K562 (cell line): ENCODE measurements at regions of chr11 and their contacts with region 1.

Region 1: DNA sequence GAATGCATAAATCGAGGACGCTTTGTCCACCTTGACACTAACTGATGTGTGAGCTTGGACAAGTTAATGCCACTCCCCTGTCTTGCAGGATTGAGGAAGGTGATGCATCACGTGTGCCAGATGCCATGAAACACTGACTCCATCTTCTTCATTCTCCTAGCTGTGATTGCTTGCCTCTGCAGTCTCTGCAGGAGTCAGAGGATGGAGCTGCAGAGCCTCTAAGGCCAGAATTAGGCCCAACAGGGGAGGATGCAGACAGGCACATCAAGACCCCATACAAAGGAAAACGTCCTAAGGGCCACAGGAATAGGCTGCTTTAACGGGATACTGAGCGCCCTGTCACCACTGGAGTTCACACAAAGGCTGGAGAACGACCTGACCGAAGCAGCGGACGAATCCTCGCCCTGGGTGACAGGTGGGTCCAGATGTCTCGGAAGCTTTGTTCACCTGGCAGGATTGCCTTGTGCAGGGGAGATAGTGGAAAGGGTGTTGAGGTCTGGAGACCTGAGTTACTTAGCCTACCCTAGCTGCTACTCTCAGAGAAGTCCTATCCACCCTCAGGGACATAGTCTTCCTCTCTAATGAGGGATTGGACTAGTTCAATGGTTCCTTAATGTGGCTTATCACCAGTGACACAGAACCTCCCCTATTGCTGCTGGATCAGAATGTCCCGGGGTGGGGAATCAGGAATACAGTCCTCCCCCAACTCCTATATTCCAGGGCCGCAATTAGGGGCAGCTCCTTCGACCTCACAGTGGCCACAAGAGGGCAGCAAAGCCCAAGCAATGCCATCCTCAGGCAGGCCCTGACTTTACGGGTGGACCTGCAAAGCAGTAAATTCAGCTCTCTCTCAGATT is 32.4 kb downstream of the DBX1 start:
- DNase-seq: peak; percentile 70 to 81 (median 74)
- ATAC-seq: peak; percentile 97
- H3K4me3 ChIP-seq: no peak overlapping the region
- H3K27ac ChIP-seq: no peak overlapping the region
- H3K4me1 ChIP-seq: peaks cover 0 to 6% of the 10 kb centered on the region in 2 experiments; a peak in 2 of 5 replicates
- H3K27me3 ChIP-seq: peaks cover 2 to 25% of the 10 kb centered on the region in 2 experiments; a peak in 3 of 5 replicates
- CTCF ChIP-seq: peak; percentile 87 to 90 (median 88)
- EP300 ChIP-seq: no peak
- POLR2A ChIP-seq: no peak
- RAD21 ChIP-seq: peak; percentile 81 to 93

Region 2: GRCh38 chr11:19903620-19904069 is 224.3 kb before region 1 on chr11:
- CTCF ChIA-PET with region 1: interaction called, 26 read pairs
- POLR2A ChIA-PET with region 1: no interaction called
- in situ Hi-C with region 1: no loop called
- intact Hi-C with region 1: loop called (anchors 1 kb)
- DNase-seq: peak; percentile 55 to 77 (median 68)
- ATAC-seq: peak; percentile 94
- H3K4me3 ChIP-seq: no peak overlapping the region
- H3K27ac ChIP-seq: no peak overlapping the region
- H3K4me1 ChIP-seq: no peaks in the 10 kb centered on the region
- H3K27me3 ChIP-seq: peaks cover 0 to 5% of the 10 kb centered on the region in 2 experiments; a peak in 1 of 5 replicates
- CTCF ChIP-seq: peak; percentile 71 to 86 (median 79)
- EP300 ChIP-seq: no peak
- POLR2A ChIP-seq: no peak
- RAD21 ChIP-seq: peak; percentile 58 to 75

Region 3: DNA sequence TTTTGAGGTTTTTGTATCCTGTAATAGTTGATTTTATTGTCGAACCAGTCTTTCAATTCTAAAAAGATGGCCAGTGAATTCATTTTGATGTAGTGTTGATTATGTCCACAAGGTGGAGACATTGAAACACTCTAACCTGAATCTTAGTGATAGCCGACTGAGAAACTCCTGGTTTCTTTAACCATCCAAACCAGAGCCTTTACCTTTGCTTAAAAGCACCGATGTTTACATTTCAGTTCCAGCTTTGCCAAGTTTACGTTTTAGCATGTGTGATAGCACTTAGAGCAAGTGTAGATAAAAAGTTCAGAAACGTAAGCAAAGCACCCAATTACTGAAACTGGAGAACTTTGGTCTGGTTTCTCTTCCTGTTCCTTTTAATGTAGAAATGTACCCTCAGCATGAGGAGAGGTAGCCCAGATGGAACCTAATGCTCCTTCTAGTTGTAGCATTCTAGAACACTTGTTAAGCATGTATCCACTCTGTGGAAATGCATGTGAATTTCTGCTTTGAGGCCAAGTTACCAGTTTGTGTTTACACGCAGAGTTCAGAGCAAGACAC is 176.3 kb before region 1 on chr11:
- CTCF ChIA-PET with region 1: interaction called, 29 read pairs
- POLR2A ChIA-PET with region 1: interaction called, 4 read pairs
- in situ Hi-C with region 1: loop called (anchors 5 kb)
- intact Hi-C with region 1: loop called (anchors 1 kb)
- DNase-seq: peak; percentile 49 to 68 (median 58)
- ATAC-seq: peak; percentile 68
- H3K4me3 ChIP-seq: no peak overlapping the region
- H3K27ac ChIP-seq: no peak overlapping the region
- H3K4me1 ChIP-seq: no peaks in the 10 kb centered on the region; a peak in 2 of 5 replicates
- H3K27me3 ChIP-seq: peaks cover 21 to 22% of the 10 kb centered on the region in 2 experiments
- CTCF ChIP-seq: peak; percentile 52 to 79 (median 56)
- EP300 ChIP-seq: no peak
- POLR2A ChIP-seq: no peak
- RAD21 ChIP-seq: peak; percentile 92 to 97

Region 4: GRCh38 chr11:20355221-20356219 is 227.6 kb after region 1 on chr11:
- CTCF ChIA-PET with region 1: interaction called, 3 read pairs
- POLR2A ChIA-PET with region 1: interaction called, 4 read pairs
- in situ Hi-C with region 1: no loop called
- intact Hi-C with region 1: loop called (anchors 1 kb)
- DNase-seq: peak; percentile 45 to 72 (median 58)
- ATAC-seq: peak; percentile 89
- H3K4me3 ChIP-seq: no peak overlapping the region
- H3K27ac ChIP-seq: no peak overlapping the region
- H3K4me1 ChIP-seq: peaks cover 0 to 28% of the 10 kb centered on the region in 2 experiments; a peak in 4 of 5 replicates
- H3K27me3 ChIP-seq: no peaks in the 10 kb centered on the region
- CTCF ChIP-seq: peak; percentile 59 to 70 (median 64)
- EP300 ChIP-seq: no peak
- POLR2A ChIP-seq: no peak
- RAD21 ChIP-seq: peak; percentile 10 to 40; a peak in 2 of 4 replicates

Region 5: GRCh38 chr11:20489948-20490347 is 362.0 kb after region 1 on chr11:
- CTCF ChIA-PET with region 1: no interaction called
- POLR2A ChIA-PET with region 1: no interaction called
- in situ Hi-C with region 1: no loop called
- intact Hi-C with region 1: no loop called
- DNase-seq: no peak
- ATAC-seq: no peak
- H3K4me3 ChIP-seq: no peak overlapping the region
- H3K27ac ChIP-seq: no peak overlapping the region
- H3K4me1 ChIP-seq: peaks cover 5 to 16% of the 10 kb centered on the region in 2 experiments; a peak in 3 of 5 replicates
- H3K27me3 ChIP-seq: no peaks in the 10 kb centered on the region
- CTCF ChIP-seq: no peak
- EP300 ChIP-seq: no peak
- POLR2A ChIP-seq: no peak
- RAD21 ChIP-seq: no peak

Region 6: GRCh38 chr11:20584093-20584774 is 456.3 kb after region 1 on chr11:
- CTCF ChIA-PET with region 1: no interaction called
- POLR2A ChIA-PET with region 1: no interaction called
- in situ Hi-C with region 1: no loop called
- intact Hi-C with region 1: no loop called
- DNase-seq: no peak
- ATAC-seq: peak; percentile 75
- H3K4me3 ChIP-seq: no peak overlapping the region
- H3K27ac ChIP-seq: no peak overlapping the region
- H3K4me1 ChIP-seq: no peaks in the 10 kb centered on the region; a peak in 1 of 5 replicates
- H3K27me3 ChIP-seq: peaks cover 0 to 6% of the 10 kb centered on the region in 2 experiments; a peak in 3 of 5 replicates
- CTCF ChIP-seq: no peak
- EP300 ChIP-seq: no peak
- POLR2A ChIP-seq: no peak
- RAD21 ChIP-seq: no peak

Region 7: GRCh38 chr11:20609727-20610707 is 482.1 kb after region 1 on chr11:
- CTCF ChIA-PET with region 1: interaction called, 7 read pairs
- POLR2A ChIA-PET with region 1: no interaction called
- in situ Hi-C with region 1: loop called (anchors 10 kb)
- intact Hi-C with region 1: loop called (anchors 1 kb)
- DNase-seq: peak; percentile 82 to 87 (median 84)
- ATAC-seq: peak; percentile 98
- H3K4me3 ChIP-seq: no peak overlapping the region
- H3K27ac ChIP-seq: no peak overlapping the region
- H3K4me1 ChIP-seq: peaks cover 0 to 8% of the 10 kb centered on the region in 2 experiments; a peak in 2 of 5 replicates
- H3K27me3 ChIP-seq: peaks cover 9 to 21% of the 10 kb centered on the region in 2 experiments; a peak in 4 of 5 replicates
- CTCF ChIP-seq: peak; percentile 93 to 97 (median 94)
- EP300 ChIP-seq: no peak
- POLR2A ChIP-seq: no peak
- RAD21 ChIP-seq: peak; percentile 92 to 93

Region 8: GRCh38 chr11:20671856-20672546 is 544.1 kb after region 1 on chr11:
- CTCF ChIA-PET with region 1: interaction called, 5 read pairs
- POLR2A ChIA-PET with region 1: no interaction called
- in situ Hi-C with region 1: no loop called
- intact Hi-C with region 1: loop called (anchors 5 kb)
- DNase-seq: peak in 3 of 4 experiments; percentile 4 to 26 (median 19)
- ATAC-seq: peak; percentile 73
- H3K4me3 ChIP-seq: no peak overlapping the region
- H3K27ac ChIP-seq: no peak overlapping the region
- H3K4me1 ChIP-seq: no peaks in the 10 kb centered on the region; a peak in 1 of 5 replicates
- H3K27me3 ChIP-seq: peaks cover 3 to 26% of the 10 kb centered on the region in 2 experiments; a peak in 3 of 5 replicates
- CTCF ChIP-seq: peak; percentile 18 to 26 (median 21); a peak in 2 of 6 replicates
- EP300 ChIP-seq: no peak
- POLR2A ChIP-seq: no peak
- RAD21 ChIP-seq: no peak